ENCODE measurements at regions of chr4 and their contacts with region 1.

Region 1: DNA sequence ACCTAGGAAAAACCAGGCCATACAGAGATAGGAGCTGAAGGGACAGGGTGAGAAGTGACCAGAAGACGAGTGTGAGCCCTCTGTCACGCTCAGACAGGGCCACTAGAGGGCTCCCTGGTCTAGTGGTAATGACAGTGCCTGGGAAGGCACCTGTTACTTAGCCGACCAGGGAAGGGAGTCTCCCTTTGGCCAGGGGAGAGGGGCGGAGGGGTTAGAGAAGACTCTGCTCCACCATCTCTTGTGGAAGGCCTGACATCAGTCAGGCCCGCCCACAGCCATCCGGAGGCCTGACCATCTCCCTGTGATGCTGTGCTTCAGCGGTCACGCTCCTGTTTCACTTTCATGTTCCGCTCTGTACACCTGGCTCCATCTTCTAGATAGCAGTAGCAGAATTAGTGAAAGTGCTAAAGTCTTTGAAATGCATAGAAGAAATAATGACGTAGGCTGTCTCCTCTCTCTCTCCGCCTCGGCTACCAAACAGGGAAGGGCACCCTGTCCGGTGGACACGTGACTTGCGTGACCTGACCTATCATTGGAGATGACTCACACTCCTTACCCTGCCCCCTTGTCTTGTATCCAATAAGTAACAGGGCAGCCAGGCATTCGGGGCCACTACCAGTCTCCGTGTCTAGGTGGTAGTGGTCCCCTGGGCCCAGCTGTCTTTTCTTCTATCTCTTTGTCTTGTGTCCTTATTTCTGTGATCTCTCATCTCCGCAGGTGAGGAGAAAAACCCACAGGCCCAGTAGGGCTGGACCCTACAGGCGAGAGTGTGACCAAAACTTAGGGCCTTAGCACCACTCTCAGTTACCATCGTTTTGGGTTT is 26.7 kb downstream of the HTT-AS start:
- DNase-seq: peak; percentile 95
- H3K4me3 Mint-ChIP-seq: peak overlapping the region; percentile 60
- H3K27ac Mint-ChIP-seq: peak overlapping the region; percentile 68
- H3K4me1 Mint-ChIP-seq: peaks cover 38% of the 10 kb centered on the region
- H3K27me3 Mint-ChIP-seq: peaks cover 10% of the 10 kb centered on the region

Region 2: GRCh38 chr4:3085948-3086655 is 38.4 kb after region 1 on chr4:
- intact Hi-C with region 1: loop called (anchors 1 kb)
- DNase-seq: no peak
- H3K4me3 Mint-ChIP-seq: no peak overlapping the region
- H3K27ac Mint-ChIP-seq: peak overlapping the region; percentile 70
- H3K4me1 Mint-ChIP-seq: peaks cover 44% of the 10 kb centered on the region
- H3K27me3 Mint-ChIP-seq: no peaks in the 10 kb centered on the region

Region 3: DNA sequence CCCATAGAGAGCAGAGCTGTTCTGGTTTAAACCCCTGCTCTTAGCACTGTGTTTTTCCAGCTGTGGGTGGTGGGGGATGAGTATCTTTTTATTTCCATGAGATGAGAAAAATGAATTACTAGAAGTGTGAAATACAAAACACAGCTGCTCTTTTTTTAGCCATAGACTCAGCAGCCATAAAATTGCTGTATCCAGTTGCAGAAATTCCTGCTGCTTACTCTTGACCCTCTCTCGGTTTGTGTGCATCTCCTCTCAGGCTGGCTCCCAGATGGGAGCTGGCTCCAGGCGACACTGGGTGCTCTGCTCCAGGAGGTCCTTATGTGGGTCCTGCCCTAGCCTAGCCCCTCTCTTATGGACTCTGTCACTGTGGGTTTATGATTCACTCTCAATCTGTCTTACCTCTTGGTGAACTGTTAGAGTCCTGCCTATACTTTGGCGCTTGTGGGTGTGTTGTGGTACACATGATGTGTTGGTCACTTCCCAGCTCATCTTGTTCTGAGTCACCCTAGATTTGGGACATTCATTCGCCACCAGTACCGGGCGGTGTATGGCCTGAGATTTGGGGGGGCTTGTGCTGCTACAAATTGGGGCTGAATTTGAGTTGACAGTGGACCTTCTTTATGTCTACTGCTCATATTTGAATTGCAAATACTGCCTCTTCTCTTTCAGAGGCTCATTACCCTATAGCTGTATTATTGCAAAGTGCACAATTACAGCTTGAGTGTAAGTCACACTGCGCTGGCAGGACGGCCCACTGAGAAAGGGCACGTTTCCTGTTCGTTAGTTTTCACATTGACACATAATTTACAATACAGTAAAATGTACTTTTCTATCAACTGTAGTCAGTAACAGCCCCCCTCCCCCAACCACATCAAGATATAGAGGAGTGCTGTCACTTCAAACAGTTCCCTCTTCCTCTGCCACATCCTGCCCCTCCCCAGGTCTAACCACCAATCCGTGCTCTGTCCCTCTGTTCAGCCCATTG is 154.3 kb after region 1 on chr4:
- intact Hi-C with region 1: loop called (anchors 1 kb)
- DNase-seq: peak; percentile 94
- H3K4me3 Mint-ChIP-seq: peak overlapping the region; percentile 47
- H3K27ac Mint-ChIP-seq: peak overlapping the region; percentile 96
- H3K4me1 Mint-ChIP-seq: peaks cover 37% of the 10 kb centered on the region
- H3K27me3 Mint-ChIP-seq: no peaks in the 10 kb centered on the region